OCI-LY7 (cell line): ENCODE measurements at regions of chr17 and their contacts with region 1.

Region 1: DNA sequence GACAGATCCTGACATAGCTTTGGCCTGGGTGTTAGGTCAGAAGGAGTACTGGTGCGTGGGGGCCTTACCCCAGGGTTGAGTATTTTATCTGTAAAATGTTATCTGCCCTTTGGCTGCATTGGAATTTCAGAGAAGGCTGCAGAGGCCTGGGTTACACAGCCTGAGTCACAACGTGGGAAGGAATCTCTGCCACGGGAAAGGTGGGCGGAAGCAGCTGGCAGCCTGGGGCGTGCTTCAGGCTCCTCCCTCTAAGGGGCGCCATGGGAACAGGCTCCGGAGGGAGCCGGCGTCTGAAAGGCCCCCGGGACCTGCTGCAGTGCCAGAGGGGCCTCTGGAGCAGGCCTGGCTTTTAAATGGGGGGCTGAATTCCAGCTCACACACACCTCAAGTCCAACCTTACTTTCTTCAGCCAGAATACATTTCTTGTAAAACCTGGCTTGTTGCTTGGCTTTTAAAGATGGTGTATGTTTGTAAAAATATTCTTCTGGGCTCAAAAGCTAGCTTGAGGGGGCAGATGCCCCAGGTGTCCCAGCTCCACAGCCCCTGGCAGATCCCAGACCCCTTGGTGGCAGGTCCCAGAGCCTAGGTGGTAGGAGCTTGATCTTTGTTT is 142.2 kb downstream of the RAB11FIP4 start:
- DNase-seq: peak; percentile 41
- H3K4me3 ChIP-seq: no peak overlapping the region
- H3K27ac ChIP-seq: no peak overlapping the region
- H3K4me1 ChIP-seq: peaks cover 54% of the 10 kb centered on the region
- CTCF ChIP-seq: peak; percentile 79

Region 2: GRCh38 chr17:31494259-31495021 is 39.2 kb before region 1 on chr17:
- CTCF ChIA-PET with region 1: interaction called, 11 read pairs
- POLR2A ChIA-PET with region 1: no interaction called
- intact Hi-C with region 1: no loop called
- DNase-seq: peak; percentile 46
- H3K4me3 ChIP-seq: no peak overlapping the region
- H3K27ac ChIP-seq: peak overlapping the region; percentile 7
- H3K4me1 ChIP-seq: peaks cover 64% of the 10 kb centered on the region
- CTCF ChIP-seq: no peak

Region 3: DNA sequence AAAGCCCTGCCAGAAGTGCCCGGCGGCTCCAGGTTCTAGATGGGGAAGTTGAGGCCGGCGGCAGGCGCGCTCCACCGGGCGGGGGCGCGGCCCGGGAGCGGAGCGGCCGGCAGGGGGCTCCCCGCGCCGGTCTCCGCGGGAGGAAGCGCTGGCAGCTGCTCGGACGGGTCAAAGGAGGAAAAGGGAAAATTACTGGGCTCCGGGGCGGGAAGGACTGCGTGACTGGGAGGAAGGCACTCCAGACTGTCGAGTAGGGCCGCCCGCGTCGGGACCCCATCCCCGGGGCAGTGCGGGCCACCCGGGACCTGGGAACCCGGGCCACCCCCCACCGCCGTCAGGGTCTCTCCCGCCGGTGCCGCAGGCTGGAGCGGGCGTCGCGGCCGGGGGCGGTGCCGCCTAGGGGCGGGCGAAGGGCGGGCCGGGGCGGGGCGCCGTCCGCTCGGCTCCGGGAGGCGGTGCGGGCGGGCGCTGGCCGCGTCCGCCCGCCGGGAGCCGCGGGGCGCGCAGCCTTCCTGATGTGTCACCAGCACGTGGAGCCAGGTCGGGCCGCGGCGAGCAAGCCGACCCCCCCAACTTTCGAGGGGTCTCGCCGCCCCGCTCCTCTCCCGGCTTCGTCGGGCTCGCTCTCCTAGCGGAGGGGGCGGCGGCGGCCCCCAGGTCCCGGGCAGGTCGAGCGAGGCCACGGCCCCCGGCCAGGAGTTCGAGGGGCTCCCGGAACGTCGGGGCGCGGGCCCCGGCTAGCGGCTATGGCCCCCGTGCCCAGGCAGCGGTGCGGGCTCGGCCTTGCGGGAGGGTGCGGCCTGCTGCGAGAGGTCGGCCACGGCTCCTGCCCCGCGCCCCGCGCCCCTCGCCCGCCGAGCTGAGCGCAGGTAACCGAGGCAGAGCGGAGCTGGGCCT is 25.3 kb after region 1 on chr17:
- CTCF ChIA-PET with region 1: no interaction called
- POLR2A ChIA-PET with region 1: interaction called, 14 read pairs
- intact Hi-C with region 1: no loop called
- DNase-seq: peak; percentile 75
- H3K4me3 ChIP-seq: peak overlapping the region; percentile 69
- H3K27ac ChIP-seq: no peak overlapping the region
- H3K4me1 ChIP-seq: peaks cover 42% of the 10 kb centered on the region
- CTCF ChIP-seq: peak; percentile 95

Region 4: GRCh38 chr17:31858642-31859473 is 325.2 kb after region 1 on chr17 and contains the start of gene COPRS:
- CTCF ChIA-PET with region 1: no interaction called
- POLR2A ChIA-PET with region 1: interaction called, 4 read pairs
- intact Hi-C with region 1: loop called (anchors 5 kb)
- DNase-seq: peak; percentile 88
- H3K4me3 ChIP-seq: peak within 1 kb of the TSS; percentile 76
- H3K27ac ChIP-seq: no peak within 1 kb of the TSS
- H3K4me1 ChIP-seq: peaks cover 18% of the 10 kb centered on the region
- CTCF ChIP-seq: no peak
- total RNA-seq, gene COPRS: 50.7 and 64.3 TPM in 2 replicates